ENCODE measurements at regions of chr13 and their contacts with region 1.

Region 1: DNA sequence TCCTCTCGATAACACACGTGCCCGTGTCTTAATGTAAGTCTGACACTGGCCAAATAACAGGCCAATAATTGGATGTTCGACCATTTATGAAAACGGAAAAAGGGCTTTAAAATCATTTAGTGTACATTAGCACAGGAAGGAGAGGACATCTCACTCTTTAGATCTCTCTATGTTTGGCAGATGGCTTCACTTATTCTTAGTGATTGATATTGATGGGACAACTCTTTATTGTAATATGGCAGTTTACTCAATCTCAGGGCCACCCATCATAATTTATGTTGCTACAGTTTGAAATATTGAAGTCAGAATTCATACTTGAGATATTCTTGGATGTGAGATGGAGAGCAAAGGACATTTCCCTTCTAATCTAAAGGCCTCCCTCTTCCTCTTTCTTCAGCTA is 430.7 kb upstream of the ARGLU1 start:
- DNase-seq: no peak
- ATAC-seq: no peak
- H3K4me3 Mint-ChIP-seq: no peak overlapping the region
- H3K27ac Mint-ChIP-seq: no peak overlapping the region
- H3K4me1 Mint-ChIP-seq: no peaks in the 10 kb centered on the region
- H3K27me3 Mint-ChIP-seq: no peaks in the 10 kb centered on the region
- CTCF ChIP-seq: no peak

Region 2: DNA sequence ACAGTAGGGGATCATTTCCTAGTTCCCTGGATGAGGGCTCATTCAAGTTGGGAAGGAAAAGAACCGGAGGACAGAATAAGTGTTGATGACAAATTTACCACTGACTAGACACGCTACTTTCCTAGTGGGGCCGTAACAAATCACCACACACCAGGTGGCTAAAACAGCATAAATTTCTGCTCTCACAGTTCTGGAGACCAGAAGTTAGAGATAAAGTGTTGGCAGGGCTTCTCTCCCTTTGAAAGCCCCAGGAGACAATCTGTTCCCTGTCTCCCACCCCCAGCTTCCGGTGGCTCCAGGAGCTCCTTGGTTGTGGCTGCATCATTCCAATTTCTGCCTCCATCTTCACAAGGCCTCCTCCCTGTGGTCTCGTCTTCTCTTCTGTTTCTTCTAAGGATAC is 365.3 kb before region 1 on chr13:
- CTCF ChIA-PET with region 1: no interaction called
- POLR2A ChIA-PET with region 1: interaction called, 10 read pairs
- DNase-seq: no peak
- ATAC-seq: no peak
- H3K4me3 Mint-ChIP-seq: no peak overlapping the region
- H3K27ac Mint-ChIP-seq: no peak overlapping the region
- H3K4me1 Mint-ChIP-seq: no peaks in the 10 kb centered on the region
- H3K27me3 Mint-ChIP-seq: no peaks in the 10 kb centered on the region
- CTCF ChIP-seq: no peak

Region 3: DNA sequence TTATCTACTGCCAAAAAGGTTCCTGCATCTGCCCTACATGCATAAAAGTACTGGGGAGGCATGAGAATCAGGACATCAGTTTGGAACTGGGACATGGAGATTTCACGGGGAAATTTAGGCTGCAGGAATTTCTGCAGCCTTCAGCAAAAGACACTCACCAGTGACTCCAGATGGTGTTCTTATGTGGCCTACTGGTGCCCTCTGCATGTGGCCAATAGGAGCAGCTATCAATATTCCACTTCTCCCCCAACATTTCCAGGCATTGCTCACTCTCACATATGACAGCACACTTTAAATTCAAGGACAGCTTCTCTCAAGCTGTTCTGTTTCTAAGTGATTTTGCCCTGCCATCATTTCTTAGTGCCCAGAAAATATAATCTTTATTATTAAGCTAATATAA is 139.8 kb after region 1 on chr13:
- CTCF ChIA-PET with region 1: no interaction called
- POLR2A ChIA-PET with region 1: no interaction called
- DNase-seq: no peak
- ATAC-seq: peak; percentile 68
- H3K4me3 Mint-ChIP-seq: no peak overlapping the region
- H3K27ac Mint-ChIP-seq: no peak overlapping the region
- H3K4me1 Mint-ChIP-seq: peaks cover 4% of the 10 kb centered on the region; the same call in 1 of the 2 replicates
- H3K27me3 Mint-ChIP-seq: no peaks in the 10 kb centered on the region
- CTCF ChIP-seq: no peak